Activated CD8-positive, alpha-beta T cell treated with anti-CD3 and anti-CD28 coated beads for 36 hours (primary cell): ENCODE measurements at regions of chr5 and their contacts with region 1.

Region 1: DNA sequence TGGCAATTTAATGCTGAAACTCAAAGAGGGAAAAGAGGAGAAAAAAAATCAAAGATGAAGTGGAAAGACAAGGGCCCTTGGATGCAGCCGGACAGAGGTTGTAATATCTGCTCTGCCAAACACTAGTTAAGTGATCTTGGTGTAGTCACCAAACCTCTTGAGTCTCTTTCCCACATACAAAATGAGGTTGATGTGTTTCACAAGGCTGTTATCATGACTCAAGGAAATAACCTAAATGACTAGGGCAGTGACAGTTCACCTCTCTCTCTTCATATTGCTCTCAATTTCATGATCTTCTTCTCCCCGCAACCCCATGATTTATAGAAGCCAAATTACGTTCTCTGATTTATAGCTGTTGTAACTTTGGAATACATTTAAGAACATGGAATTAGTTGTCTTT is 44.9 kb downstream of the PIK3R1 start:
- DNase-seq: no peak
- ATAC-seq: peak; percentile 64
- H3K4me3 Mint-ChIP-seq: no peak overlapping the region
- H3K27ac Mint-ChIP-seq: peak overlapping the region; percentile 21
- H3K4me1 Mint-ChIP-seq: peaks cover 82% of the 10 kb centered on the region
- H3K27me3 Mint-ChIP-seq: no peaks in the 10 kb centered on the region
- CTCF ChIP-seq: no peak

Region 2: GRCh38 chr5:68272289-68272688 is 11.8 kb after region 1 on chr5:
- CTCF ChIA-PET with region 1: interaction called, 12 read pairs
- POLR2A ChIA-PET with region 1: interaction called, 3 read pairs
- intact Hi-C with region 1: no loop called
- DNase-seq: no peak
- ATAC-seq: no peak
- H3K4me3 Mint-ChIP-seq: no peak overlapping the region
- H3K27ac Mint-ChIP-seq: no peak overlapping the region
- H3K4me1 Mint-ChIP-seq: peaks cover 85% of the 10 kb centered on the region
- H3K27me3 Mint-ChIP-seq: no peaks in the 10 kb centered on the region
- CTCF ChIP-seq: peak; percentile 67